ENCODE measurements at regions of chr5 and their contacts with region 1.

Region 1: DNA sequence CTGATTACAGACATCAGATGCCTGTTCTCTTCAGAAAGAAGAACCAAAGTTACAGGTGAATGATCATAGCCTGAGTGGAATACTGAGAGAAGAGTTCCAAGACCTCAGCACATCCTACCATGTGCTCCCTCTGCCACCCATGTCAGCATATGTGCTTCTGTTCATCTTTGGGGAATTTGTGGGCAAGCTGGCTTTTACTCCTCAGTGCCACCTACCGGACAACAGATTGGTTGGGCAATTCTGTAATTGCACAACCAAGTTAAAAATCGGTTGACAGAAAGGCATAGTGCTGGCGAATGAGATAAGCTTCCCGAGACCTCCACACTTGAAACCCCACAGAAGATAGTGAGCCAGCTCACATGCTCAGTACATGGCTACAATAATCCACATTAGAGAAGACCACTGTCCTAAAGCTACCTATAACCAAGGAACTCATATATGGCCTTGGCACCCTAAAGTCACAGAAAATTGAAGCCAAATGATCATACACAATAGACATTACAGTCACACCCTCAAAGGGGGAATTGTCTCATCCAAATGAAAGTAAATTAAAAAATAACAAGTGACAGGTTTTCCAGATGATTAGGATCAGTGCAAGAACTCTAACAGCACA is 1238.0 kb upstream of the NUDT12 start:
- DNase-seq: no peak
- CTCF ChIP-seq: peak; percentile 30

Region 2: DNA sequence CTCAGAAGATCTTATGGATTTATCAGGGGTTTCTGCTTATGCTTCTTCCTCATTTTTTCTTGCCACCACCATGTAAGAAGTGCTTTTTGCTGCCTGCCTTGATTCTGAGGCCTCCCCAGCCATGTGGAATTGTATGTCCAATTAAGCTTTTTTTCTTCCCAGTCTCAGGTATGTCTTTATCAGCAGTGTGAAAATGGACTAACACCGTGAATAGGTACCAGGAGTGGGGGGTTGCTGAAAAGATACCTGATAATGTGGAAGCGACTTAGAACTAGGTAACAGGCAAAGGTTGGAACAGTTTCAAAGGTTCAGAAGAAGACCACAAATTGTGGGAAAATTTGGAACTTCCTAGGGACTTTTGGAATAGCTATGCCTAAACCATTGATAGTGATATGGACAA is 15.4 kb before region 1 on chr5:
- CTCF ChIA-PET with region 1: no interaction called
- POLR2A ChIA-PET with region 1: no interaction called
- DNase-seq: no peak
- CTCF ChIP-seq: no peak

Region 3: GRCh38 chr5:104815212-104815611 is 14.7 kb after region 1 on chr5:
- CTCF ChIA-PET with region 1: interaction called, 10 read pairs
- POLR2A ChIA-PET with region 1: no interaction called
- DNase-seq: no peak
- CTCF ChIP-seq: no peak

Measured in GM10248 (cell line).